Motor neuron (in vitro differentiated cells): ENCODE measurements at regions of chr1 and their contacts with region 1.

Region 1: DNA sequence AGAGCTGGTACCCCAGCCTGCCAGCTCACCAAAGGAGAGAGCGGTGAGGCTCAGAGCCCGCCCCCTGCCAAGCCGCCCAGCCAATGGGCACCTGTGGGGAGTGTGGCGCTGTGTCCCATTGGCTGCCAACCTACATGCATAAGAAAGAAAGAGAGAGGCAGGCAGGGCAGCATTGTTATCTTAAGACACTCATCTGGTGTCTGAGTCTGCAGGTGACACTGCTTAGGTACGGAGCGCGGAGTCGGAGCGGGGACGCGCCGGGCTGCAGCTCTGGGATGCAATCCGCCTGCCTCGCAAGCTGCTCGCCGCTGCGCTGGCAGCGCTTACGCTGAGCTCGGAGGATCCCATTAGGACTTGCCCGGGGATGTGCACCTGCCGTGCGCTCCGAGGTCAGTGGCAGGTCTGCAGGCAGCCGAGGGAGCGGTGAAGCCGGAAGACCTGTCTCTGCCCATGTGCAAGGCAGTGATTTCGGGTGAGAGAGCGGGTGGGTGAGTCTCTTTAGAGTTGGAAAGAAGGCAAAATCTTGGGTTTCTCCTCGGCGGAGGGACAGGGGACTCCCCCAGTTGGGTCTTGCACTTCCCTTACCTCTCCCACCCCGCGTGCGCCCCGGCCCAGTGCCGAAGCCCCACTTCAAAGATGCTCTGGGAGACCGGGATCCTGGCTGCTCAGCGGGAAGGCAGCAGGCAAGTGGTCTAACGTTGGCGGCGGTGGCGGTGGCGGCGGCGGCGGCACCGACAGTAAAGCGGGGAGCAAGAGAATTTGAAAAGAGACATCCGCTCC is at the start of gene BRINP2:
- ATAC-seq: peak; percentile 84 to 99 (median 98)
- H3K4me3 ChIP-seq: peak within 1 kb of the TSS; percentile 41 to 59 (median 50)
- H3K27ac ChIP-seq: no peak within 1 kb of the TSS
- H3K4me1 ChIP-seq: peaks cover 2 to 8% of the 10 kb centered on the region in 2 donors
- total RNA-seq, gene BRINP2: 0.09 to 6.2 (median 3.2) TPM in 7 of 8 experiments, not detected in the other

Region 2: GRCh38 chr1:176903474-176903873 is 267.5 kb before region 1 on chr1:
- in situ Hi-C with region 1: loop called in 4 of 9 experiments (anchors 10 to 25 kb)
- ATAC-seq: no peak
- H3K4me3 ChIP-seq: no peak overlapping the region
- H3K27ac ChIP-seq: no peak overlapping the region
- H3K4me1 ChIP-seq: peaks cover 0 to 8% of the 10 kb centered on the region in 2 donors